ENCODE measurements at regions of chr22 and their contacts with region 1.

Region 1: DNA sequence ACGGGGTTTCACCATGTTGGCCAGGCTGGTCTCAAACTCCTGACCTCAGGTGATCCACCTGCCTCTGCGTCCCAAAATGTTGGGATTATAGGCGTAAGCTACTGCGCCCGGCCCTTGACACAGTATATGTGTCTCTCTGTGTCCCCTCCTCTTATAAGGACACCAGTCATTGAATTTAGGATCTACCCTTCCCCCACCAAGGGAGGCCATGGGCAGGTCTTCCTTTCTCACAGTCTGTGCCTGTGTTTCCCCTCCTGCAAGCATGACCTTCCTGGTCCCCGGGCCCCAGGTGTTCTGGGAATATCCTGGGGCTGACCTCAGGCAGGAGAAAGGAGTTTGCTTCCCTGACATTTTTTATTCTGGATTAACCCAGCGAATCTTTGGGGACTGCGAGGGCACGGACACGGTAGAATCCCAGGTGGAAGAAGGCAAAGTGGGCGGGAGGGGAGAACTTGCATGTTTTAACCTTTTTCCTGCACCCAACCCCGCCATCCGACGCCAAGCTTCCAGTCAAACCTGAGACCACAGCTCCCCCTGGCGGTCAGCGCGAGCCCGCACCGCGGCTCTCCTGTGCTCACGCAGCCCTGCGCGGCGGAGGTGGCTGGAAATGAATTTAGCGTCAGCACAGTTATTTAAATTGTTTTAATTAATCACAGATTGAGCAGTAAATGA is 42.1 kb upstream of the ISX start:
- DNase-seq: peak; percentile 49 to 84 (median 52)
- ATAC-seq: peak in 3 of 4 donors; percentile 64 to 76 (median 68)
- H3K4me3 ChIP-seq: no peak overlapping the region
- H3K27ac ChIP-seq: no peak overlapping the region
- H3K4me1 ChIP-seq: peaks cover 0 to 6% (median 0%) of the 10 kb centered on the region in 12 donors
- H3K27me3 ChIP-seq: peaks cover 0 to 30% (median 10%) of the 10 kb centered on the region in 9 donors
- CTCF ChIP-seq: peak; percentile 68 to 92 (median 82)
- POLR2A ChIP-seq: no peak

Region 2: GRCh38 chr22:33766091-33766490 is 1257.7 kb before region 1 on chr22:
- intact Hi-C with region 1: loop called in 1 of 10 experiments (anchors 10 kb)
- DNase-seq: no peak
- ATAC-seq: no peak
- H3K4me3 ChIP-seq: no peak overlapping the region
- H3K27ac ChIP-seq: no peak overlapping the region
- H3K4me1 ChIP-seq: peaks cover 0 to 32% (median 4%) of the 10 kb centered on the region in 12 donors
- H3K27me3 ChIP-seq: no peaks in the 10 kb centered on the region
- CTCF ChIP-seq: no peak
- POLR2A ChIP-seq: no peak

Region 3: GRCh38 chr22:33932997-33933396 is 1090.8 kb before region 1 on chr22:
- intact Hi-C with region 1: loop called in 4 of 10 experiments (anchors 10 kb)
- DNase-seq: no peak
- ATAC-seq: no peak
- H3K4me3 ChIP-seq: no peak overlapping the region
- H3K27ac ChIP-seq: no peak overlapping the region
- H3K4me1 ChIP-seq: no peaks in the 10 kb centered on the region
- H3K27me3 ChIP-seq: no peaks in the 10 kb centered on the region
- CTCF ChIP-seq: no peak
- POLR2A ChIP-seq: no peak

Region 4: GRCh38 chr22:34414484-34415440 is 609.1 kb before region 1 on chr22:
- intact Hi-C with region 1: loop called in 6 of 10 experiments (anchors 2 to 10 kb)
- DNase-seq: peak in 2 of 5 donors; percentile 9 to 24
- ATAC-seq: peak in 3 of 4 donors; percentile 65 to 71 (median 68)
- H3K4me3 ChIP-seq: no peak overlapping the region
- H3K27ac ChIP-seq: no peak overlapping the region
- H3K4me1 ChIP-seq: no peaks in the 10 kb centered on the region
- H3K27me3 ChIP-seq: peaks cover 0 to 4% (median 0%) of the 10 kb centered on the region in 9 donors
- CTCF ChIP-seq: peak in 11 of 12 donors; percentile 9 to 54 (median 32)
- POLR2A ChIP-seq: no peak

Region 5: GRCh38 chr22:35043252-35043931 is 19.6 kb after region 1 on chr22:
- intact Hi-C with region 1: no loop called
- DNase-seq: no peak
- ATAC-seq: no peak
- H3K4me3 ChIP-seq: no peak overlapping the region
- H3K27ac ChIP-seq: no peak overlapping the region
- H3K4me1 ChIP-seq: no peaks in the 10 kb centered on the region
- H3K27me3 ChIP-seq: peaks cover 0 to 47% (median 6%) of the 10 kb centered on the region in 9 donors
- CTCF ChIP-seq: no peak
- POLR2A ChIP-seq: no peak